ENCODE measurements at regions of chr11 and their contacts with region 1.

Region 1: DNA sequence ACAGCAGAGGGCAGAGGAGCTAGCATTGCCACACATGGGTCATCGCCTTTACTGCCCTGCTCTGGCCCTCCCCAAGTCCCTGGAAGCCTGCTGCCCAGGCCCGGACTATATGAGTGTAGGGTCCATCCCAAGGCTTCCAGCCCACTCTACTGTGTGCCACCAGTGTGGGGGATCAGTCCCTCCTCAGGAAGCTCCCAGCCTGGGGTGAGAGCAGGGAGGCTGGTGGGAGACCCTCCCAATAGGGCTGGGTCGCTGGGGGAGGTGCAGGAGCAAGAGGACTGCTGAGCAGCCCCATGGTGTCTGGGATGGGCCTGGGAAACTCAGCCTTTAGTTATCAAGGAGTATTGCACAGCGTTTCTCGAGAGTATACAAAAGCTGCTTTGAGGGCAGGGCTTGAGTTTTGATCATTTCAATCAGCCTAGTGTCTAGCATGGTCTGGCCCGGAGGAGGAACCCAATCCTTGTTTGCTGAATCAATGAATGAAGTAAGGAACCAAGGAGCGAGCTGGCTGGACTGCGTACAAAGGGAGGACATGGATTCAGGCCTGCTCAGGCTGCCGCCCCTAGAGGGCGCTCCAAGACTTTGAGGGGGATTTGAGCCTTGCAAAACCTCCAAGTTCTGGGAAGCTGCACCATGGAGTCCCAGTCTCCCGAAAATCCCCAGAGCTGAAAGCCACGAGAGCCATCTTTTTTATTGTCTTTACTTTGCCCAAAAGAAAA is 89.0 kb upstream of the PARVA start:
- H3K4me3 ChIP-seq: no peak overlapping the region
- H3K27ac ChIP-seq: no peak overlapping the region
- H3K4me1 ChIP-seq: no peaks in the 10 kb centered on the region
- CTCF ChIP-seq: peak; percentile 62; the same call in 1 of the 2 replicates

Region 2: DNA sequence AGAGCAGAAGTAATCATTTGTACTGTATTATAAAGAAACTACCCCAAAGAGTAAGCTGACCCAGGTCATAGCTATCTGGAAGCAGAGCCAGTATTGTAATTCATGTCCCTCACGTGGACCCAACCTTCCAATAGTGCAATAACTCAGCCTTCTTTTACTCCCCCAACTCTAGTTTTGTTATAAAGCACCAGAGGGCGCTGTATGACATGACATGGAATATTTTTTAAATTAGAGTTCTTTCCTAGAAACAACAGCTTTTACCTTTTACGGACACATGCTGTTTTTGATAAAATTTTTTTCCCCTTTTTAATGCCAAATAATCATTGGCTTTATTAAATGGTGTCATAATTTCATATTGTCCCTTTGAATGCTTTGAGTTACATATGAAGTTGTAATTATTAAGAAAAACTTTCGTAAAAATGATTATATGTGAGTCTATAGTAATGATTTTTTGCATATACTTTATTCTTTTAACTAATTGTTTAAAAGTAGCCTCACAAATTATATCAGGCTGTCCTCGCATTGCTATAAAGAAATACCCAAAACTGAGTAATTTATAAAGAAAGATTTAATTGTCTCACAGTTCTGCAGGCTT is 356.8 kb before region 1 on chr11:
- CTCF ChIA-PET with region 1: interaction called, 11 read pairs
- POLR2A ChIA-PET with region 1: no interaction called
- H3K4me3 ChIP-seq: no peak overlapping the region
- H3K27ac ChIP-seq: no peak overlapping the region
- H3K4me1 ChIP-seq: no peaks in the 10 kb centered on the region
- CTCF ChIP-seq: no peak

Region 3: GRCh38 chr11:12301379-12301778 is 13.0 kb after region 1 on chr11:
- CTCF ChIA-PET with region 1: interaction called, 17 read pairs
- POLR2A ChIA-PET with region 1: no interaction called
- H3K4me3 ChIP-seq: no peak overlapping the region
- H3K27ac ChIP-seq: no peak overlapping the region
- H3K4me1 ChIP-seq: no peaks in the 10 kb centered on the region
- CTCF ChIP-seq: no peak

Region 4: GRCh38 chr11:12318791-12319438 is 30.5 kb after region 1 on chr11:
- CTCF ChIA-PET with region 1: interaction called, 10 read pairs
- POLR2A ChIA-PET with region 1: no interaction called
- H3K4me3 ChIP-seq: no peak overlapping the region
- H3K27ac ChIP-seq: peak overlapping the region; percentile 0; the same call in 1 of the 2 replicates
- H3K4me1 ChIP-seq: 0 out of 2 replicates have a peak, but pooled peaks cover 10% of the 10 kb centered on the region
- CTCF ChIP-seq: no peak

Region 5: DNA sequence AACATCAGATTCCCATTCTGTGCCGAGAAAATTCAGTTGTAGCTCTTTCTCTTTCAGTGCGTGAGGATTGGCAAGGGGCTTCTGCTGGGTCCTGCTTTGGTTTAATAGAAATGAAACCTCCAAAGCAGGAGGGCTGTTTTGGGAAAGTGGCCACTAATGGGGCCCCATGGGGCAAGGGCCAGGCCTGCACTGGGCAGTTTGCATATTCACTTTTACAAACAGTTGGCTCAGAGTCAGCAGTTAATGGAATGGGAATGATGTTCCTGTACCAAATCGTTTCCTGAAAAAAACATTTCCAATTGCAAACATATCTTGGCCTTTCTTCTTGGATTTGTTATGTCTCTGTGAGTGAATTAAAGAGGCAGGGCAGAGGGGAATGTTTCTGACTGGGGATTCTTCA is 181.1 kb after region 1 on chr11:
- CTCF ChIA-PET with region 1: no interaction called
- POLR2A ChIA-PET with region 1: no interaction called
- H3K4me3 ChIP-seq: no peak overlapping the region
- H3K27ac ChIP-seq: no peak overlapping the region
- H3K4me1 ChIP-seq: no peaks in the 10 kb centered on the region
- CTCF ChIP-seq: no peak

Region 6: DNA sequence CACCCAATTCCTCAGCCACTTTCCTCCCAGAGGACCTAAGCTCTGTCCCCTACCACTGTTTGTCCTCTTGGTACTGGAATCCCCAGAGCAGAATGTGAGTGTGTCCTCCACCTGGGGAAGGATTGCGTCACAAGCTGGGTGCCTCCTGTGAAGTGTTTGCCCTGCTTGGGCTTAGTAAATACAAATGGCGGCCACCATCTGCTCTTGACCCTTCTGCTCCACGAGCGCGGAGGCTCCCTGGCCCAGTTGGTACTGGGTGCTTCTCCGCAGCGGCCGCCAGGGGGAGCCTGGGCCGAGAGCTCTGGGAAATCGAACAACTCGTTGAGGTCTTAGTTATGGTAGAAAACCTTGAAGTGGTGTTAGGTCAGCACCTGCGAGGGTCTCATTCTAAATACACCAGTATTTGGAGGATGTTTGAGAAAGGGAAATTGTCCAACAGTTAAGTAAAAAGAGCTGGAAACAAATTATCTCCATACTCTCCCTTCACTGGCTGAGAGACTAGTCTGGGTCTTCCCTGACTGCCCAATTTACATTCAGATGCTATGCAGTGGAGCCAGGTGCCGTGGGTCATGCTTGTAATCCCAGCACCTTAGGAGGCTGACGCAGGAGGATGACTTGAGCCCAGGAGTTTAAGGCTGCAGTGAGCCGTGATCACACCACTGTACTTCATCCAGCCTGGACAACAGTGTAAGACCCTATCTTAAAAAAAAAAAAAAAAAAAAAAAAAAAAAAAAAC is 311.2 kb after region 1 on chr11:
- CTCF ChIA-PET with region 1: no interaction called
- POLR2A ChIA-PET with region 1: no interaction called
- H3K4me3 ChIP-seq: no peak overlapping the region
- H3K27ac ChIP-seq: no peak overlapping the region
- H3K4me1 ChIP-seq: no peaks in the 10 kb centered on the region; the same call in 1 of the 2 replicates
- CTCF ChIP-seq: no peak

Region 7: DNA sequence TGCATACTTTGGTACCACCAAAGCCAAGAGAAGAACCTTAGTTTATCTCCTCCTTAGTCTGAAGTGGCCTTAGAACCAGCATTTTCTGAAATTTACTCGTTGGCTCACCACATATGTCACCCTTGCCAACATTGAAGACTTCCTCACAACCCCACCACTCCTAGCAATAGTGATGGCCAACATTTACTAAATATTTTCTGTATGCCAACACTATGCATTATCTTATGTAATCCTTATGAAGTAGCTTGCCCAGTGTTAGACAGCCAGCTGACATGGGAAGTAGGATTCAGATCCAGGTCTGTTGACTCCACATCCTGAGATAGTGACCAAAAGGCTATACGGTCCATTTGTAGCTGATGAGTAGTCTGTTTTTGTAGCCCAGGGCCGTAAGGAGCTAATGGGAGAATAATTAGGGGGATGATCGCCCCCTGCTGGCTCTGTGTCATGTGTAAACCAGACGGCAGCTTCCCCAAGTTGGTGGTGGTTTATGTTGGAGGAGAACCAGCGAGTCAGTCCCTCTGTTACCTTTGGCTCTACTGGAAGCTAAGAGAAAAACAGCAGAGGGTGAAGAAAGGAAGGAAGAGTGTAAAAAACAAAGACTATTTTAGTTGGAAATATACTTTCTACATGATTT is 600.3 kb after region 1 on chr11:
- CTCF ChIA-PET with region 1: interaction called, 13 read pairs
- POLR2A ChIA-PET with region 1: no interaction called
- H3K4me3 ChIP-seq: no peak overlapping the region
- H3K27ac ChIP-seq: no peak overlapping the region
- H3K4me1 ChIP-seq: no peaks in the 10 kb centered on the region
- CTCF ChIP-seq: peak; percentile 46; the same call in 1 of the 2 replicates

Region 8: DNA sequence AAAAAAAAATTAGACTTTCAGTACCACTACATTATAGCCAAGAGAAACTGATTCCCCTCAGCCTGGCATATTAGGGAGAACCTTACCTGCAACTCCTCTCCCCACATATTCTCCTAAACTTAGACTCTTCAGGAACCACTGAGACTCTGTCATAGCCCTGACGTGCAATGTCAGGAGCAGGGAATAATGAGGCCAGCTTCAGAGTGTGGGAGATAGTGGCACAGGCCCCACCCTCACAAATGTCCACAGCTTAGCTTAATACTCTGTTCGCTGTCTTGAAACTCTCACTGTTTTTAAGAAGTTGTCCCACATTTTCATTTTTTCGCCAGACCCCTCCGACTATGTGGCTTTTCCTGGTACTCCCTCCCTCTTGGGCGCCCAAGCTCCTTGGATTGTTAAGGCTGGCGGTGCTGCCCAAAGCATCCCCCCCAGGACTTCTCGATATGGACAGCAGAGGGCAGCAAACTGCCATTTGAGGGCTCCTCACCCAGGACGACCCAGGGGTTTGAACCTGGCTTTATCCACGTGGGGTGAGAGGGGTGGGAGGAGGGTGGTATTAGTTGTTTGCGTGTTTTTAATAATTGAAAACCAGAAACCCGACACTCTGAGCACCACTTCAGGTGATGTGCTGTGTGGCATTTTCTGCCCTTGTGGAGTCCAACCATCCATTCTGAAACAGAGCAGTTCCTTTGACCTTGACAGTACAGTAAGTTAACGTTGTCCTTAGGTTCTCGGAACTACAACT is 675.6 kb after region 1 on chr11:
- CTCF ChIA-PET with region 1: interaction called, 22 read pairs
- POLR2A ChIA-PET with region 1: no interaction called
- H3K4me3 ChIP-seq: no peak overlapping the region
- H3K27ac ChIP-seq: no peak overlapping the region
- H3K4me1 ChIP-seq: no peaks in the 10 kb centered on the region
- CTCF ChIP-seq: 0 out of 2 replicates have a peak, but pooled peaks have one; percentile 35